Psoas muscle (tissue), 8 donors: ENCODE measurements at regions of chr4 and their contacts with region 1.

Region 1: DNA sequence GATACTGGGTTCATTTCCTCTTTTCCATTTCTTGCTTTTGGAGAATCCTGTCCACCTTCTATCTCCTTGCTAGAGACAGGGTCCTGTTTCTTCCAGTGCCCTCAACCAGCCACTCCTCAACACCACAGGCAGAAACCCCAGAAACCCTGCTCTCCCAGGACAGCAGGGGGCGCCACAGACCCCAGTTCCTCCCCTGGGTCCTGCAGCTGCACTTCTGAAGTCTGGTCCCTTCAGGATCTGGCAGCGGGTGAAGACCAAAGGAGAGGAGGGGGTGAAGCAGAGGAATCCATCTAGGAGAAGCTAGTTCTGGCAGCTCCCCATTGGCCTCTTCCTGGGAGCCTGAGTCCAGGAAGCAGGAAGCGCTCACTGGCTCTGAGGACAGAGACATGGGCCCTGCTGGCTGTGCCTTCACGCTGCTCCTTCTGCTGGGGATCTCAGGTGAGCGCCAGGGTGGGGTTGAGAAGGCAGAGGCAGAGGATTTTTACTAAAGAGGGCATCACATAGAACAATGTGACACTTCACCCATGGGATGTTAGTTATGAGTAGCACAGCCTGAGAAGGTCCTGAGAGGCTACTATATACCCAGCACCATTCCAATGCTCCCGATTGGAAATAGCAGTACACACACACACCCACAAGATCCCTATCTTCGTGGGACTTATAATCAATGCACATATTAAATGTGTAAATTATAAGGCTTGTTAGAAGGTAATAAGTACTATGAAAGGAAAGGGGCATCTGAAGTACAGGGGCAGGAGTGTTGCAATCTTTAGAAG is at the start of gene PRSS48:
- DNase-seq: peak; percentile 64 to 78
- ATAC-seq: peak; percentile 70 to 97 (median 91)
- H3K4me3 ChIP-seq: no peak within 1 kb of the TSS
- H3K27ac ChIP-seq: no peak within 1 kb of the TSS
- H3K4me1 ChIP-seq: peaks cover 7% of the 10 kb centered on the region
- H3K27me3 ChIP-seq: no peaks in the 10 kb centered on the region
- CTCF ChIP-seq: peak; percentile 69
- total RNA-seq, gene PRSS48: not detected

Region 2: GRCh38 chr4:151304755-151305154 is 27.8 kb after region 1 on chr4:
- intact Hi-C with region 1: loop called in 1 of 2 experiments (anchors 2 kb)
- DNase-seq: no peak
- ATAC-seq: peak in 1 of 4 donors; percentile 54
- H3K4me3 ChIP-seq: no peak overlapping the region
- H3K27ac ChIP-seq: no peak overlapping the region
- H3K4me1 ChIP-seq: no peaks in the 10 kb centered on the region
- H3K27me3 ChIP-seq: no peaks in the 10 kb centered on the region
- CTCF ChIP-seq: no peak

Region 3: GRCh38 chr4:151325111-151325948 is 48.4 kb after region 1 on chr4 and contains the start of gene SH3D19:
- intact Hi-C with region 1: loop called in 1 of 2 experiments (anchors 10 kb)
- DNase-seq: peak; percentile 70 to 84
- ATAC-seq: peak; percentile 63 to 82 (median 73)
- H3K4me3 ChIP-seq: peak within 1 kb of the TSS; percentile 87
- H3K27ac ChIP-seq: peak within 1 kb of the TSS; percentile 94
- H3K4me1 ChIP-seq: peaks cover 4% of the 10 kb centered on the region
- H3K27me3 ChIP-seq: no peaks in the 10 kb centered on the region
- CTCF ChIP-seq: no peak
- total RNA-seq, gene SH3D19: 26.9 to 59.0 (median 32.4) TPM